ENCODE measurements at regions of chr6 and their contacts with region 1.

Region 1: GRCh38 chr6:36759148-36759759 is 61.6 kb downstream of the RAB44 start:
- H3K4me3 Mint-ChIP-seq: no peak overlapping the region
- H3K27ac Mint-ChIP-seq: no peak overlapping the region
- H3K4me1 Mint-ChIP-seq: peaks cover 49% of the 10 kb centered on the region
- H3K27me3 Mint-ChIP-seq: peaks cover 8% of the 10 kb centered on the region

Region 2: GRCh38 chr6:36615018-36615761 is 144.1 kb before region 1 on chr6:
- intact Hi-C with region 1: loop called (anchors 1 kb)
- H3K4me3 Mint-ChIP-seq: no peak overlapping the region
- H3K27ac Mint-ChIP-seq: no peak overlapping the region
- H3K4me1 Mint-ChIP-seq: peaks cover 40% of the 10 kb centered on the region
- H3K27me3 Mint-ChIP-seq: no peaks in the 10 kb centered on the region

Region 3: GRCh38 chr6:36685936-36686667 is 73.2 kb before region 1 on chr6:
- intact Hi-C with region 1: loop called (anchors 5 kb)
- H3K4me3 Mint-ChIP-seq: peak overlapping the region; percentile 27
- H3K27ac Mint-ChIP-seq: peak overlapping the region; percentile 78
- H3K4me1 Mint-ChIP-seq: peaks cover 55% of the 10 kb centered on the region
- H3K27me3 Mint-ChIP-seq: no peaks in the 10 kb centered on the region

Region 4: DNA sequence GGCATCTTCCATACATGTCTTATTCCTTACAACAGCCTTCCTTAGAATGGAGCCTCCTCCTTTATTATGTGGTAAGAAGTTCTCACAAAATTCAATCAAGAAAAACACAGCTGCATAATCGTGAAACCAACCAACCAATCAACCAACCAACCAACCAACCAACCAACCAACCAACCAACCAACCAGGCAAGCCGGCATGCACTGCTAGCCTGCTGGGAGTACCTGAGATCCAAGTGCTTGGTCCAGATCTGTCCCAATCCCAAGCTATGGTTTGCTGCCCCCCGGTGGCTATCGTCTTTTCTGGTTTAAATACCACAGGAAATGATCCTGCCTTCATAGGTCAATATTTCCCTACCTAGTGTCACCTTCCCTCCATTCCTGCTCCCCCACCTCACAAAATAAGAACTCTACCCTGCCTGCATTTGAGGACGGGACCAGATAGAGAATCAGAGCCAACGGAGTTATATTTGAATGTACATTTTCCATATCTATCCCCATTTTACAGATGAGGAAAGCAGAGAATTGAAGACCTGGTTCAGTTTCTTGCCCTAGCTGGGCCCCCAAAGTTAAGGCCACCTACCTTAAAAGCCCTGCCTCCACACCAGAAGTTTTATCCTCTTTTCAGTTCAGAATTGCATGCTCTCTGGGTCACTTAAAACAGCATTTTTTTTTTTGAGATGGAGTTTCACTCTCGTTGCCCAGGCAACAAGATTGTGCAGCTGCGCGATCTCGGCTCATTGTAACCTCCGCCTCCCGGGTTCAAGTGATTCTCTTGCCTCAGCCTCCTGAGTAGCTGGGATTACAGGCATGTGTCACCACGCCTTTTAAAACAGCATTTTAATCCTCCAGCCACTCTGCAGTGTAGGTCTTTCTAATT is 34.5 kb before region 1 on chr6:
- intact Hi-C with region 1: loop called (anchors 2 kb)
- H3K4me3 Mint-ChIP-seq: no peak overlapping the region
- H3K27ac Mint-ChIP-seq: peak overlapping the region; percentile 22
- H3K4me1 Mint-ChIP-seq: peaks cover 43% of the 10 kb centered on the region
- H3K27me3 Mint-ChIP-seq: no peaks in the 10 kb centered on the region

Region 5: GRCh38 chr6:37059344-37060206 is 300.3 kb after region 1 on chr6:
- intact Hi-C with region 1: no loop called
- H3K4me3 Mint-ChIP-seq: no peak overlapping the region
- H3K27ac Mint-ChIP-seq: peak overlapping the region; percentile 81
- H3K4me1 Mint-ChIP-seq: peaks cover 46% of the 10 kb centered on the region
- H3K27me3 Mint-ChIP-seq: peaks cover 9% of the 10 kb centered on the region